ENCODE measurements at regions of chr9 and their contacts with region 1.

Region 1: DNA sequence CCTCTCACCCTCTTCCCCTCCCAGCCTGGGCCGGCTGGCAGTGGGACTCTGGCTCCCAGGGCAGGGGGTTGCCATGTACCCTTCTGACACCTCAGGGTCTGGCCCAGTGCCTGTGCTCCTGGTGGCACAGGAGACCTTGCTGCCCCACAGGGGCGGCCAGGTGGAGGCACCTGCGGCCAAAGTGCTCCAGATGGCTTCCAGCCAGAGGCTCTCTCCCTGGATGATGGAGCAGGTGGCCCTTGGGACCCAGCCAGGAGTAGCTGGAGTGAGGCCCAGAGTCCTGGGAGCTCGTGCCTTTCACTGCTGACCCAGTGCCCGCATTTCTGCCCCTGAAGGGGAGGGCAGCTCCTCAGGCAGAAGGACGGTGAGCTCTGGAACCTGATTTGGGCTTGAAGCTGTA is 87.3 kb downstream of the NTNG2 start:
- DNase-seq: no peak
- H3K4me3 Mint-ChIP-seq: no peak overlapping the region
- H3K27ac Mint-ChIP-seq: no peak overlapping the region
- H3K4me1 Mint-ChIP-seq: peaks cover 2% of the 10 kb centered on the region
- H3K27me3 Mint-ChIP-seq: peaks cover 20% of the 10 kb centered on the region

Region 2: DNA sequence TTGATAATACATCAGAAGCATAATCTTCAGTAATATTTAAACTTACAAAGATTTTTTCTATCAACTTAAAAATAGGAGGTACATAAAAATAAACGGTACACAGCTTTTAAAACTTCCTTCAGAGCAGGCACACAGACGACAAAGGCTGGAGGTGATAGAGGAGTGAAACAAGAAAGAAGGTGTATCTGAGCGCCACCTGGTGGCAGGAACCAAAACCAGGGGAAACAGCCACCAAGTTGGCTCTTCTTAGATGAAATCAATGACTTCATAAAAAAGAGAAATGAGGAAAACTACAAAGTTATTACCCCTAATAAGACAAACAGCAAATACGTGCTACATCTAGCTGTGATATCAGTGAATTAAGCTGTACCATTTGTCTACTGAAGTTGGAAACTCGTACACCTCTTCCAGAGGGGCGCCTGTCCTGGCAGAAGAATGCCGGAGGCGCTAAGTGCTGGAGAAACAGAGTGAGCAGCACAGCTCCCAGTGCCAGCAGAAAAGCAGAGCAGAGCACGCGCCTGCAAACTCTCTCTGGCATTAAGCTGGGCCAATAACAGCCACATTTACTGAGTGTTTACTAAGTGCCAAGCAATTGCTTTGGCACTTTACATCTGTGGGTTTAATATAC is 19.7 kb after region 1 on chr9:
- CTCF ChIA-PET with region 1: interaction called, 16 read pairs
- POLR2A ChIA-PET with region 1: no interaction called
- DNase-seq: peak; percentile 76
- H3K4me3 Mint-ChIP-seq: no peak overlapping the region
- H3K27ac Mint-ChIP-seq: peak overlapping the region; percentile 31
- H3K4me1 Mint-ChIP-seq: peaks cover 8% of the 10 kb centered on the region
- H3K27me3 Mint-ChIP-seq: no peaks in the 10 kb centered on the region

Measured in activated CD4-positive, alpha-beta memory T cell treated with anti-CD3 and anti-CD28 coated beads, Interleukin-2, amount 10 ng/mL, durations not matched to agents 7 days and 5 days (primary cell).